ENCODE measurements at regions of chr1 and their contacts with region 1.

Region 1: DNA sequence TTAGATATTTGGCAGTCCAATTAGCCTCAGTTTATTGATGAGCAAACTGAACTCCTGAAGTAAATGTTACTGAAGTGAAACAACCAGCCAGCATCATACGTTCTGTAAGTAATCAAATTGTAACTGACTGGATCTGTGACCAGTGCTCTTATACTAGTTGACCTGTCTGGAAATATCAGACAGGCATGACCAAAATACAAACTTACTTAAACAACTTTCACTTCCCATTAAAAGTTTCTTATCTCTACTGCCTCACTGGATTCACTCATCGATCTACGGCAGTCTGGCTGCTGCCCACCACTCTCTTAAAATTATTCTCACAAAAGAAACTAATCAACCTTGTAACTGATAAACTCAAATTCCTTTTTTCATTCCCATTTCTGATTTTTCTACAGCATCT is 56.4 kb downstream of the WDR3 start:
- DNase-seq: no peak
- H3K4me3 ChIP-seq: no peak overlapping the region
- H3K27ac ChIP-seq: no peak overlapping the region
- H3K4me1 ChIP-seq: no peaks in the 10 kb centered on the region
- H3K27me3 ChIP-seq: no peaks in the 10 kb centered on the region
- CTCF ChIP-seq: no peak
- EP300 ChIP-seq: no peak
- POLR2A ChIP-seq: no peak

Region 2: DNA sequence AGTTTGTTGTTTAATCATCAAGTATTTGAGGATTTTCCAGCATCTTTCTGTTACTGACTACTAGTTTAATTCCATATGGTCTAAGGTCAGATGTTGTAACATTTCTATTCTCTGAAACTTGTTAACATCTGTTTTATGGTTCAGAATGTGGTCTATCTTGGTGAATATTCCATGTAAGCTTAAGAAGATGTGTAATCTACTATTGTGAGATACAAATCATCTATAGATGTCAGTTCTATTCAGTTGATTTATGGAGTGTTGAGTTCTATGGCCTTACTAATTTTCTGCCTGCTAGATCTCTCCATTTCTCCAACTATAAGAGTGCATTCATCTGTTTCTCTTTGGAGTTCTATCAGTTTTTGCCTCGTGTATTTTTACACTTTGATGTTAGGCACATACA is 1123.0 kb after region 1 on chr1:
- intact Hi-C with region 1: loop called in 1 of 4 experiments (anchors 5 kb)
- DNase-seq: no peak
- H3K4me3 ChIP-seq: no peak overlapping the region
- H3K27ac ChIP-seq: no peak overlapping the region
- H3K4me1 ChIP-seq: no peaks in the 10 kb centered on the region
- H3K27me3 ChIP-seq: no peaks in the 10 kb centered on the region
- CTCF ChIP-seq: no peak
- EP300 ChIP-seq: no peak
- POLR2A ChIP-seq: no peak